Heart right ventricle (tissue), 16 donors: ENCODE measurements at regions of chr2 and their contacts with region 1.

Region 1: DNA sequence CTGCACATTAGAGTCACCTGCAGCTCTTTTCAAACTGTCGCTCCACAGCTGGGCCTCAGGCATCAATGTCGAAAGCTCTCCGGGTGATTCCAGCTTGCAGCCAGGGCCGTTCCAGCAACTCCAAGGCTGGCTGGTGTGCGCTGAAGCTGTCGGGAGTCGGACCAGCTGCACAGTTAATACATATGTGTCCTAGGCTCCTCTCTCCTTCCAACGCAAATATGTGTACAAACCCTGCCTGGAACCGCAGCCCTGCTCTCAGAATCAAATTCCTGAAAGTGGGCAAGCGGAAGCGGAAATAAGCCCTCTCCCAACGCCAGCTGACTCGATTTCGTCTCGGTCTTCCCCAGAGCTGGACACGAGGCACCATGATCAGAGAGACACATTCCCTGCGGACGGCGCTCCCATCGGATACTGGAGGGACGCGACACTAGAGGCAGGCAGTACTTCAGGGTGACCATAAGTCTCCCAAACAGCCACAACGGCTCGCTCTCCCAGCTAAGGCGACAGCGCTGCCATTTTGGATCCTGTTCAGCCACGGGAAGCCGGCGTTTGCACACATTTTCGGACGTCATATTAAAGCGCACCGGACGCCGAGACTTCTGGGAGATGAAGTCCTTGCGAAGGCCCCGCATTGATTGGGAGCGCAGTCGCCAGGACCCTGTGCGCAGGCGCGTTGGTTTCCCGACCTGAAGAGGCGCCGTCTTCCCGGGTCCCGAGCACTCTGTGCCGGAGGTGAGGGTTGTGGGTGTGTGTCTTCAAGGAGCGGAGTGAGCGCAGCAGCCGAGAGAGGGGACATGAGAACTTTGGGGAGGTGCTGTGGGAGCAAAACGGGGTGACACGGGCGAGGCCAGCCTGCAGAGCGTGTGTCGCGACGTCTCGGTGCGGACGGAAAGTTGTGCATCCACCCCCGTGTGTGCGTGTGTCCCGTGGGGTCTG is at the start of gene ZNF2:
- DNase-seq: peak; percentile 98
- ATAC-seq: peak; percentile 98 to 99 (median 99)
- H3K4me3 ChIP-seq: peak within 1 kb of the TSS; percentile 59 to 93 (median 76)
- H3K27ac ChIP-seq: peak within 1 kb of the TSS; percentile 57 to 97 (median 94)
- H3K4me1 ChIP-seq: peaks cover 4 to 27% (median 22%) of the 10 kb centered on the region in 9 donors
- H3K27me3 ChIP-seq: no peaks in the 10 kb centered on the region
- CTCF ChIP-seq: peak in 3 of 9 donors; percentile 4 to 32 (median 12)
- total RNA-seq, gene ZNF2: 2.6 to 4.8 (median 3.5) TPM

Region 2: GRCh38 chr2:95207111-95207961 is 41.9 kb after region 1 on chr2 and contains the start of gene ZNF892:
- intact Hi-C with region 1: loop called in 2 of 10 experiments (anchors 2 to 5 kb)
- DNase-seq: peak; percentile 92
- ATAC-seq: peak; percentile 98 to 99 (median 99)
- H3K4me3 ChIP-seq: peak within 1 kb of the TSS; percentile 71 to 86 (median 80)
- H3K27ac ChIP-seq: peak within 1 kb of the TSS; percentile 52 to 95 (median 90)
- H3K4me1 ChIP-seq: peaks cover 3 to 22% (median 16%) of the 10 kb centered on the region in 9 donors
- H3K27me3 ChIP-seq: no peaks in the 10 kb centered on the region
- CTCF ChIP-seq: peak in 8 of 9 donors; percentile 23 to 76 (median 56)
- total RNA-seq, gene ZNF892: 1.9 to 4.4 (median 3.0) TPM